ENCODE measurements at regions of chr1 and their contacts with region 1.

Region 1: DNA sequence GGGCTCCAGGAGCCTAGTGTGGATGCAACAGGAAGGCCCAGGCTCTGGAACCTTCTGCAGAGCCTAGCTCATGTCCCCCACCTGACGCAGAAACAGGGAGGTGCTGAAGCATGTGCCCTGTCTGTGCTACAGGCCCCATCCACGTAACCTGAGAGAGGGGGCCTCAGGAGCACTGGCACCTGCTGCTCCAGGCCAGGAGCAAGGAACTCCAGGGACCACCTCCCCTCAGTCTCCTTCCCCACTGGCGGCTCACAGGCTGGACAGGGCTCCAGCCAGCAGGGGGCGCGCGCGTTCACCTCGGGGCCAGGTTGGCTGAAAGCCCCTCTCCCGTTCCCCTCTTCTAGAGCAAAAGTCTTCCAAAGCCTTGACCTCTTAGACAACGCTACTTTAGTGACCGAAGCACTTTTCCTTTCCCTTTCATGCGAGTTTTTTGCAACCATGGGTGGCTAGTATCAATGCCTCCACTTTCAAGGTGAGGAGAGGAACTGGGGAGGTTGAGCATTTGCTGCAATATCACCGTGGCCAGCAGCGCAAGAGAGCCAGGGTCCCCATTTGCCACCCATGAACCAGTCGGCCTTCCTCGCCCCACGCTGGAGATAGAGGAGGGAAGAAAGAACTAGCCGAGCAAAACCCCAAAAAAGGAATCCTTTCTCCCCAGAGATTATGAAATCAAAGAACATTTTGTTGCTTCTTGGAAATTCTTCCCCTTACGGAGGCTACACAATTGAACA is 52.4 kb upstream of the GPR157 start:
- DNase-seq: peak; percentile 50 to 65 (median 57)
- H3K4me3 ChIP-seq: peak overlapping the region in 1 of 2 donors; percentile 47
- H3K4me3 Mint-ChIP-seq: peak overlapping the region; percentile 66 to 86 (median 80)
- H3K27ac ChIP-seq: no peak overlapping the region
- H3K27ac Mint-ChIP-seq: no peak overlapping the region
- H3K4me1 ChIP-seq: peaks cover 13% of the 10 kb centered on the region
- H3K4me1 Mint-ChIP-seq: peaks cover 3 to 9% (median 8%) of the 10 kb centered on the region in 4 donors
- H3K27me3 ChIP-seq: peaks cover 17% of the 10 kb centered on the region
- H3K27me3 Mint-ChIP-seq: peaks cover 13 to 15% of the 10 kb centered on the region in 2 donors

Region 2: DNA sequence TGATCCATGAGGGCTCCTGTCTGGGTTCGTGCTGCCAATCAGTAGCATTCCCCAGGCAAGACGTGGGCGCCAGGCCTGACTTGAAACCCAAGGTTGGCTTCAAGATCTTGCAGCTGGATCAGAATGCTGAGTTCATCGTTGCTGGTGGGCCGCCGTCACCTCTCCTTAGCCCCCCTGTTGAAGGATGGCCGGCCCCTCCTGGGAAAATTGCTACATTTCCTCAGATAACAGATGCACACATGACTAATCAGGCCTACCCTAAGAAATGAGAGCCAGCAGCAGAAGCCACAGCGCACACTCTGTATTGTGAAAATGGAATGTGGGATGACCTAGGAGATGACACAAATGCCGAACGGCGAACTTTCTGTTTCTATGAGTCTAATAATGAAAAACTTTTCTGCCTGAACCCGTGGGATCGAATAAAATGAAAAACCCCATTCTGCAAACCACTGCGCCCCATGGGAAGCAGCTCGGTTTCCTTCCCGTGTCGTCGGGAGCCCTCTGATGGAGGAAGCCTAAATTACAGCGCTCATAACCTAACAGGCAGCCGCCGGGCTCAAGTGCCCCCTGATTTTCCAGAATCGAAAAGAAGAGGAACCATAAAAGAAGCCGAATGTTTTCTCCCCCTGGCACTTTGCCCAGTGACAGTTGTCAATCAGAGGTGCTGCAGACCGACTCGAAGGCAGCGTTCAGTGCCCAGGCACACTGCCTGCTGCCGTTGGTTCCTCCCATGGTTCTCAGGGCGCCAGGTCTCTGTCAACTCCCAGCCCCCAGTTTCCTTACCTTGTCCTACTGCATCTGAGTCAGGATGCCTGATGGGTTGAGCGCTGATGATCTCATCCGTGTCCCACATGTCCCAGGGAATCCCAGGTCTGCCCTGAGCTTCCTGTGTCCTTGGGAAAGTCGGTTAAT is 15.0 kb after region 1 on chr1:
- CTCF ChIA-PET with region 1: interaction called, 14 read pairs
- POLR2A ChIA-PET with region 1: no interaction called
- intact Hi-C with region 1: no loop called
- DNase-seq: peak in 4 of 5 donors; percentile 30 to 46 (median 42)
- H3K4me3 ChIP-seq: no peak overlapping the region
- H3K4me3 Mint-ChIP-seq: peak overlapping the region in 1 of 8 donors; percentile 54
- H3K27ac ChIP-seq: no peak overlapping the region
- H3K27ac Mint-ChIP-seq: no peak overlapping the region
- H3K4me1 ChIP-seq: peaks cover 4% of the 10 kb centered on the region
- H3K4me1 Mint-ChIP-seq: peaks cover 8 to 17% (median 11%) of the 10 kb centered on the region in 4 donors
- H3K27me3 ChIP-seq: peaks cover 21% of the 10 kb centered on the region
- H3K27me3 Mint-ChIP-seq: peaks cover 41 to 47% of the 10 kb centered on the region in 2 donors

Measured in CD4-positive, alpha-beta memory T cell (primary cell).